MCF 10A (cell line): ENCODE measurements at regions of chr2 and their contacts with region 1.

Region 1: DNA sequence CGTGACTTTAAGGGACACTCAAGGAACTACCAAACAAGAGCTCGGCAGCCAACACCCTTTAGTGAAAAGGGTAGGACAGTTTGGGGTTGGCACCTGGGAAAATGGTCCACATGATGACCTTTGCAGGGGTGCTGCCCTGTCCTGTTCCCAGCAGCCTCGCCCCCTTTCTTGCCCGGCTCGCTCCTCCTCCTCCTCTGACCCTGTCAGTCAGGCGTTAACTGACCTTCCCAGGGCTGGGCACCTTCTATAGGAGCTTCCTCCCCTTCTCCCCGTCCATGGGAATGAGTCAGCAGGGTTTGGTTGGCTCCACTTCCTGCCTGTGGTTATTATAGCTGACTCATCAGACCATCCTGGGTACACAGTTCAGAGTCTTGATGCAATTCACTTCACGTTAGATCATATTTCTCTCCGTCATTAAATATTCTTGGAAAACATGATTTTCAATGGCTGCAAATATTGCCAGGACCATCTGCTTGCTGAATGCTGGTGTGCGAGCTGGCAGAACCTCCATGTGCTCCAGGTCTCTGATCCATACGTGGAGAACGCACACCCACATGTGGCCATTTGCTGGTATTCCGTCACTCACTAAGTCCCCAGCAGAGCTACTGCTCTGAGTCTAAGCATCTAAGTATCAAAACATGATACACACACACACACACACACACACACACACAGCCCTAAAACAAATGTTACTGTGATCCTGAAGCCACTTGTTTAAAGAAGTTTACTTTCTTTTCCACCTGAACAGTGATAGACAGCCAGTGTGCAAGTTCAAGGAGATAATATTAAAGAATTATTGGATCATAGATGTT is 185.0 kb downstream of the ANAPC1 start:
- DNase-seq: peak; percentile 100
- H3K4me3 Mint-ChIP-seq: peak overlapping the region; percentile 63
- H3K27ac Mint-ChIP-seq: peak overlapping the region; percentile 86
- H3K4me1 Mint-ChIP-seq: peaks cover 31% of the 10 kb centered on the region
- H3K27me3 Mint-ChIP-seq: no peaks in the 10 kb centered on the region
- CTCF ChIP-seq: peak; percentile 43

Region 2: GRCh38 chr2:110807522-110807921 is 891.4 kb before region 1 on chr2:
- CTCF ChIA-PET with region 1: interaction called, 13 read pairs
- POLR2A ChIA-PET with region 1: interaction called, 4 read pairs
- intact Hi-C with region 1: loop called (anchors 1 kb)
- DNase-seq: no peak
- H3K4me3 Mint-ChIP-seq: no peak overlapping the region
- H3K27ac Mint-ChIP-seq: no peak overlapping the region
- H3K4me1 Mint-ChIP-seq: peaks cover 7% of the 10 kb centered on the region
- H3K27me3 Mint-ChIP-seq: peaks cover 70% of the 10 kb centered on the region
- CTCF ChIP-seq: no peak

Region 3: GRCh38 chr2:110812726-110813645 is 886.0 kb before region 1 on chr2:
- CTCF ChIA-PET with region 1: interaction called, 13 read pairs
- POLR2A ChIA-PET with region 1: interaction called, 4 read pairs
- intact Hi-C with region 1: loop called (anchors 1 kb)
- DNase-seq: no peak
- H3K4me3 Mint-ChIP-seq: no peak overlapping the region
- H3K27ac Mint-ChIP-seq: no peak overlapping the region
- H3K4me1 Mint-ChIP-seq: peaks cover 14% of the 10 kb centered on the region
- H3K27me3 Mint-ChIP-seq: peaks cover 35% of the 10 kb centered on the region
- CTCF ChIP-seq: no peak

Region 4: DNA sequence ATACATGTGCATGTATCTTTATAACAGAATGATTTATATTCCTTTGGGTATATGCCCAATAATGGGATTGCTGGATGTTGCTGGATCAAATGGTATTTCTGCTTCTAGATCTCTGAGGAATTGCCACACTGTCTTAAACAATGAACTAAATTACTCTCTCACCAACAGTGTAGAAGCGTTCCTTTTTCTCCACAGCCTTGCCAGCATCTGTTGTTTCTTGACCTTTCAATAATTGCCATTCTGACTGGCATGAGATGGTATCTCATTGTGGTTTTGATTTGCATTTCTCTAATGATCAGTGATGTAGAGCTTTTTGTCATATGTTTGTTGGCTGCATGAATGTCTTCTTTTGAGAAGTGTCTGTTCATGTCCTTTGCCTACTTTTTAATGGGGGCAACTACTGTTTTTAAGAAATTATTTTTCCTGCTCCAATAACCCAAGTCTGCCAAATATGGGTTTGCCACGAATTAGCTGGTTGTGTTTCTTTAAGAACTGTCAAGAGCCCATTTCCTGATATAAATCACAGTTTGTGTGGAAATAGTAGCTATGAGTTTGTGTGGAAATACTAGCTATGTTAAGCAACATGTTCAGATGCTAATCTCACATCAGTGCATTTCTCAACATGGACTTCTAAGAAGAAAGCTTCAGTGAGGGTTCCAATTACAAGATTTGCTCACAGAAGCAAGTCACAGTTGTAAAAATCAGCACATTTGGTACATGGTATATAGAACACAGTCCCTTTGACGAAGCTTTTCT is 74.4 kb before region 1 on chr2:
- CTCF ChIA-PET with region 1: interaction called, 5 read pairs
- POLR2A ChIA-PET with region 1: interaction called, 11 read pairs
- intact Hi-C with region 1: no loop called
- DNase-seq: peak; percentile 90
- H3K4me3 Mint-ChIP-seq: peak overlapping the region; percentile 38
- H3K27ac Mint-ChIP-seq: peak overlapping the region; percentile 70
- H3K4me1 Mint-ChIP-seq: peaks cover 44% of the 10 kb centered on the region
- H3K27me3 Mint-ChIP-seq: no peaks in the 10 kb centered on the region
- CTCF ChIP-seq: no peak

Region 5: DNA sequence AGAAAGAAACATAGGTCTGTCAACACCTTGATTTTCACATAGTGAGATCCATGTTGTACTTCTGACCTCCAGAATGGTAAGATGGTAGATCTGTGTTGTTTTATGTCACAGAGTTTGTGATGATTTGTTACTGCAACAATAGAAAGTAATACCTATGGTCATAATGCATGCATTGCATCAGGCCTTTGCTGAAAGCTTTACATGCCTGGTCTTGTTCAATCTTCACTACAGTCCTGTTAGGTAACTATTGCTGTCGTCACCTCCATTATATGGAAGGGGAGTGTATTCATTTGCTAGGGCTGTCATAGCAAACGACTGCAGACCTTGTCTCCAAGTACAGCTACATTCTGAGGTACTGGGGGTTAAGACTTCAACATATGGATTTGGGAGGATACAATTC is 58.5 kb before region 1 on chr2:
- CTCF ChIA-PET with region 1: no interaction called
- POLR2A ChIA-PET with region 1: interaction called, 13 read pairs
- intact Hi-C with region 1: no loop called
- DNase-seq: peak; percentile 92
- H3K4me3 Mint-ChIP-seq: no peak overlapping the region
- H3K27ac Mint-ChIP-seq: peak overlapping the region; percentile 5
- H3K4me1 Mint-ChIP-seq: peaks cover 12% of the 10 kb centered on the region
- H3K27me3 Mint-ChIP-seq: no peaks in the 10 kb centered on the region
- CTCF ChIP-seq: no peak

Region 6: GRCh38 chr2:111659416-111660281 is 39.3 kb before region 1 on chr2:
- CTCF ChIA-PET with region 1: interaction called, 12 read pairs
- POLR2A ChIA-PET with region 1: interaction called, 36 read pairs
- intact Hi-C with region 1: no loop called
- DNase-seq: peak; percentile 97
- H3K4me3 Mint-ChIP-seq: peak overlapping the region; percentile 45
- H3K27ac Mint-ChIP-seq: peak overlapping the region; percentile 99
- H3K4me1 Mint-ChIP-seq: peaks cover 50% of the 10 kb centered on the region
- H3K27me3 Mint-ChIP-seq: no peaks in the 10 kb centered on the region
- CTCF ChIP-seq: no peak